Activated CD8-positive, alpha-beta T cell treated with anti-CD3 and anti-CD28 coated beads, Interleukin-2, amount 10 ng/mL, durations not matched to agents 7 days and 5 days (primary cell): ENCODE measurements at regions of chr15 and their contacts with region 1.

Region 1: GRCh38 chr15:59528965-59529402 is 82.6 kb upstream of the GCNT3 start:
- DNase-seq: peak; percentile 83
- ATAC-seq: peak; percentile 80
- H3K4me3 Mint-ChIP-seq: no peak overlapping the region
- H3K27ac Mint-ChIP-seq: no peak overlapping the region
- H3K4me1 Mint-ChIP-seq: peaks cover 16% of the 10 kb centered on the region
- H3K27me3 Mint-ChIP-seq: peaks cover 12% of the 10 kb centered on the region

Region 2: DNA sequence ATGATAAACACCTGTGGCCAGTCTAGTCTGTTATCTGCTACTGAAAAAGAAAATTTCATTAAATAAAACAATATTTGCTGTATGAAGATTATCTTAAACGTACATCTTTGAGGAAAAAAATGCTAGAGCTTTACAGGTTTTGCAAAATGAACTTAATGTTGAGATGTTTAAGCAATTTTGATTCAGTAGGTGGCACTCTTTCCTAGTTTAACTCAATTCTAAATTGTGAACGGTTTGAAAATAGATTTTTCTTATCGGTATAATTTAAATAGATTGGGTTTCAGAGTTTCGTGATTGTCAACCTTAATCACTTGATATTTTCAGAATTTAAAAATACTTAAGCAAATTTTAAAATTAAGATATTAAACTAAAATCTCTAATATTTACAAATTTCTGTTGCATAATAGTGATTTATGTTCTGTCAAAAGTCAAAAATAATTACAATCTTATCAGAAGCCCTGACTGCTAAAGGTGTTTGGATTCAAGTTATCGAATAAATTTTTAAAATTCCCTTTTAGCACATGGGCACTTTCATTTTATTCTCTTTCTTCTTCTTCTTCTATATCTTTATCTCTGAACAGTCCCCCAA is 548.5 kb before region 1 on chr15:
- CTCF ChIA-PET with region 1: interaction called, 14 read pairs
- POLR2A ChIA-PET with region 1: no interaction called
- DNase-seq: no peak
- ATAC-seq: no peak
- H3K4me3 Mint-ChIP-seq: no peak overlapping the region
- H3K27ac Mint-ChIP-seq: no peak overlapping the region
- H3K4me1 Mint-ChIP-seq: peaks cover 54% of the 10 kb centered on the region
- H3K27me3 Mint-ChIP-seq: peaks cover 4% of the 10 kb centered on the region

Region 3: DNA sequence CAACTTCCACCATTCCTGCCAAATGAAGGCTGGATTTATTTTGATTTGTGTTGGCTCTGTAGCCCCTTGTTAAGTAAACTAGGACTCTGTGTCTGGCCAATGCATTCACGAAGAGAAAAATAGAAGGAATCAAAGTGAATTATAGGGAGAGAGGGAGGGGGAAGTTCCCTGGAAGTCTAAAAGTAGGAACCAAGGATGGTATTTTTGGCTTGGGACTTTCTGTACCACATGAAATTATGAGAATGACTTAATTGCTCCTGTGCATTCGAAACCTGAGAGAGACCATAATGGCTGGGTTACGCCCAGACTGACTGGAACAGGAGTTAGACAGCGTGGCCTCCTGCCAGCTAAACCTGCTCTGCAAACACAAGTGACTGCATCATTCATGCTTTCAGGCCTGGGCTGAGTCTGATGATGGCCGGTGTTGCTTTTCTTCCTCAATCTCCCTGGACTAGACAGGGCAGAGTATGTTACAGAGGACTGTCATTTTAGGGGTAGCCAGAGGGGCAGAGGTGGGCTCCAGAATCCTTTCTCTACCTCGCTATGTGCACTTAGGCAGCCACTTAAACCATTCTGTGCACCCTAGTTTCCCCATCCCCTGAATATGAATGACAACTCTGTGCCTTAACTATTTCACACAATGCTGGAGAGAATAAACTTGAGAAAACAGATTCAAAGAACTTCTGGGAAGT is 215.2 kb before region 1 on chr15:
- CTCF ChIA-PET with region 1: no interaction called
- POLR2A ChIA-PET with region 1: no interaction called
- DNase-seq: no peak
- ATAC-seq: no peak
- H3K4me3 Mint-ChIP-seq: no peak overlapping the region
- H3K27ac Mint-ChIP-seq: no peak overlapping the region
- H3K4me1 Mint-ChIP-seq: peaks cover 30% of the 10 kb centered on the region
- H3K27me3 Mint-ChIP-seq: peaks cover 9% of the 10 kb centered on the region

Region 4: GRCh38 chr15:59492389-59493377 is 36.3 kb before region 1 on chr15:
- CTCF ChIA-PET with region 1: interaction called, 17 read pairs
- POLR2A ChIA-PET with region 1: no interaction called
- DNase-seq: peak; percentile 68
- ATAC-seq: peak; percentile 87
- H3K4me3 Mint-ChIP-seq: no peak overlapping the region
- H3K27ac Mint-ChIP-seq: no peak overlapping the region
- H3K4me1 Mint-ChIP-seq: peaks cover 4% of the 10 kb centered on the region
- H3K27me3 Mint-ChIP-seq: peaks cover 23% of the 10 kb centered on the region

Region 5: GRCh38 chr15:59516655-59517461 is 12.1 kb before region 1 on chr15:
- CTCF ChIA-PET with region 1: interaction called, 39 read pairs
- POLR2A ChIA-PET with region 1: no interaction called
- DNase-seq: no peak
- ATAC-seq: no peak
- H3K4me3 Mint-ChIP-seq: no peak overlapping the region
- H3K27ac Mint-ChIP-seq: no peak overlapping the region
- H3K4me1 Mint-ChIP-seq: no peaks in the 10 kb centered on the region
- H3K27me3 Mint-ChIP-seq: peaks cover 30% of the 10 kb centered on the region

Region 6: DNA sequence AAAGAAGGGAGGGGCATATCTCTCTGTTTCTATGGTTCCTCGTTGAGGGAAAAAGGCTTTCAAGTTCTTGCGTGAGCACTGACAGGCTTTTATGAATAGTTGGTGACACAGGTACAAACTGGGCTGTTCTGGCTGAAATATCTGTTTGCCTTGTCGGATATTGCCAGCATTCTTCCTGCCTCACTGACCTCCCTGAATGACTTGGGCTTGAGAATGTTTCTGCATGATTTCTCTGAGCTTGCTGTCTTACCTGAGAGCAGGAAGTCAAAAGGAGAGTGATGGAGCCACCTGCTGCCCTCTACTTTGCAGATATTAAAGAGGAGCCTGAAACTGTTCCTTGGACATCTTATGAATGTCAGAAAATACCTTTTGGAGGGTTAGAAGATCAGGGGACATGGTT is 87.4 kb after region 1 on chr15:
- CTCF ChIA-PET with region 1: interaction called, 12 read pairs
- POLR2A ChIA-PET with region 1: no interaction called
- DNase-seq: no peak
- ATAC-seq: no peak
- H3K4me3 Mint-ChIP-seq: no peak overlapping the region
- H3K27ac Mint-ChIP-seq: no peak overlapping the region
- H3K4me1 Mint-ChIP-seq: peaks cover 4% of the 10 kb centered on the region
- H3K27me3 Mint-ChIP-seq: peaks cover 20% of the 10 kb centered on the region

Region 7: DNA sequence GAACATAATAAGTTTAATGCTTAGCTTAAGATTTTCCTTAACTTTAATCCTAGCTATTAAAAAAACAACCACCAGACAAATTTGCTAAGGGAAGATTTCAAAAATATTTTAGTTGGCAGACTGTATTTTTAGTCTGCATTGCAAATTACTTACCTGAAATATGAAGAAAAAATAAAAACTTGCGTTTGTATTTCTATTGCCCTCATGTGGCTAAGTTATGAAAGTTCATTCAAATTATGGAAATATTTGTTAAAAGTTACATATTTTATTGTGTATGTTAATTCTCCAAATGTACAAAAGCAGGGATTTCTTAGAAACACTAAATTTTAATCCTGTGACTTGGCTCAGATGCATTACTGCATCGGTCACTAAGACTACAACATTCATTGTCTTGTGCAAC is 113.4 kb after region 1 on chr15:
- CTCF ChIA-PET with region 1: interaction called, 22 read pairs
- POLR2A ChIA-PET with region 1: no interaction called
- DNase-seq: no peak
- ATAC-seq: no peak
- H3K4me3 Mint-ChIP-seq: no peak overlapping the region
- H3K27ac Mint-ChIP-seq: no peak overlapping the region
- H3K4me1 Mint-ChIP-seq: no peaks in the 10 kb centered on the region
- H3K27me3 Mint-ChIP-seq: no peaks in the 10 kb centered on the region